ENCODE measurements at regions of chr9 and their contacts with region 1.

Region 1: GRCh38 chr9:27333241-27334052 is 36.5 kb upstream of the EQTN start:
- DNase-seq: peak in 3 of 6 donors; percentile 36 to 64 (median 40)
- ATAC-seq: peak; percentile 85 to 96 (median 93)
- H3K4me3 ChIP-seq: no peak overlapping the region
- H3K27ac ChIP-seq: no peak overlapping the region
- H3K4me1 ChIP-seq: peaks cover 0 to 3% (median 0%) of the 10 kb centered on the region in 3 donors
- H3K27me3 ChIP-seq: no peaks in the 10 kb centered on the region
- CTCF ChIP-seq: peak; percentile 77 to 91 (median 83)

Region 2: DNA sequence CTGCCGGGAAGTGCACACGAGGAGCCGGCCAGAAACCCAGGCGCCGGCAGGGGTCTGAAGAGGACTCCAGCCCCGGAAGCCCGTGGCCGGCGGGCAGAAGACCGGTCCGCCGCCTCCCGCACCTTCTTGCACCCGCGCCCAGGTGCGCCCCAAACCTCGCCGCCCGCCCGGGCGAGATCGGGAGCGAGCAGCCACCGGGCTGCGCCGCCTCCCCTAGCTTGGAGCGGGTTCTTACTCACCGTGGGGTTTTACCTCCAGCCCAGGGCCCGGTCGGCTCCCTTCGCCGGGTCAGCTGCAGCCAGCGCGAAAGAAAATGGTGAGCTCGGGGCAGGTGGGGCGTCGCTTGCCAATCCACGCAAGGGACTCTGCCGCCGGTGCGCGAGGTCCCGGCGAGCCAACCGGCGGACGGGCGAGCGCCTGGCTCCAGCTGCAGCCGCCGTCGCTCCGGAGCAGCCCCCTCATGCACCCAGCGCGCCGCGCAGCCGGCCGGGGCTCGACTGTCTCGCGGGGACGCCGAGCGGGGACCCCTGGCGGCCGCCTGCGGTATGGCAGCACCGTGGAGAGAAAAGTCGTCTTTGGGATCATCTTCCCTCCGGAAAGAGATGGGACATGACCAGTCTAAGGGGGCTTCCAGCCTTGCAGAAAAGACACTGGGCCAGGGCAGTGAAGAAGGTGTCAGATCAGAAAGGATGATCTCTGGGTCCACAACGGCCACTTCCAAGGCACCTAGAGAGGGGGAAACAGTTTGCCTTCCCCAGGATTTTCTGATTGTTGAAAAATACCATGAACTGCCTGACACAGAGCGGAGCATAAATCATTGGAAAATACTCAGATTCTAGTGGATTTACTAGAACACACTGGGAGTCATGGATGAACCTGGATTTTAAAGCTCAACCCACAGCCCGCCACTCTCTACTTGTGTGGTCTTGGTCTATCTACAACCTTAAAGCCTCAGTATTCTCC is 196.2 kb after region 1 on chr9 and contains the start of gene MOB3B:
- intact Hi-C with region 1: loop called in 2 of 3 experiments (anchors 5 to 10 kb)
- DNase-seq: peak; percentile 69 to 97 (median 84)
- ATAC-seq: peak; percentile 78 to 89 (median 84)
- H3K4me3 ChIP-seq: peak within 1 kb of the TSS; percentile 73 to 98 (median 90)
- H3K27ac ChIP-seq: peak within 1 kb of the TSS; percentile 63 to 89 (median 78)
- H3K4me1 ChIP-seq: peaks cover 0 to 12% (median 8%) of the 10 kb centered on the region in 3 donors
- H3K27me3 ChIP-seq: no peaks in the 10 kb centered on the region
- CTCF ChIP-seq: peak; percentile 90 to 96 (median 95)
- total RNA-seq, gene MOB3B: 3.2 to 10.5 (median 5.1) TPM

Region 3: GRCh38 chr9:27539479-27540441 is 206.3 kb after region 1 on chr9:
- intact Hi-C with region 1: loop called (anchors 5 to 10 kb)
- DNase-seq: peak in 2 of 6 donors; percentile 7 to 14
- ATAC-seq: peak; percentile 70 to 86 (median 73)
- H3K4me3 ChIP-seq: no peak overlapping the region
- H3K27ac ChIP-seq: peak overlapping the region in 2 of 4 donors; percentile 73 to 81
- H3K4me1 ChIP-seq: peaks cover 10 to 28% (median 13%) of the 10 kb centered on the region in 3 donors
- H3K27me3 ChIP-seq: no peaks in the 10 kb centered on the region
- CTCF ChIP-seq: no peak

Region 4: GRCh38 chr9:27600256-27600655 is 266.8 kb after region 1 on chr9:
- intact Hi-C with region 1: no loop called
- DNase-seq: no peak
- ATAC-seq: peak in 3 of 4 donors; percentile 54 to 88 (median 60)
- H3K4me3 ChIP-seq: no peak overlapping the region
- H3K27ac ChIP-seq: peak overlapping the region in 1 of 4 donors; percentile 44
- H3K4me1 ChIP-seq: no peaks in the 10 kb centered on the region
- H3K27me3 ChIP-seq: no peaks in the 10 kb centered on the region
- CTCF ChIP-seq: no peak

Measured in pancreas (tissue), 10 donors.